GM10248 (cell line): ENCODE measurements at regions of chr2 and their contacts with region 1.

Region 1: GRCh38 chr2:183248866-183249567 is 124.8 kb downstream of the NUP35 start:
- DNase-seq: peak; percentile 24
- CTCF ChIP-seq: peak; percentile 56

Region 2: DNA sequence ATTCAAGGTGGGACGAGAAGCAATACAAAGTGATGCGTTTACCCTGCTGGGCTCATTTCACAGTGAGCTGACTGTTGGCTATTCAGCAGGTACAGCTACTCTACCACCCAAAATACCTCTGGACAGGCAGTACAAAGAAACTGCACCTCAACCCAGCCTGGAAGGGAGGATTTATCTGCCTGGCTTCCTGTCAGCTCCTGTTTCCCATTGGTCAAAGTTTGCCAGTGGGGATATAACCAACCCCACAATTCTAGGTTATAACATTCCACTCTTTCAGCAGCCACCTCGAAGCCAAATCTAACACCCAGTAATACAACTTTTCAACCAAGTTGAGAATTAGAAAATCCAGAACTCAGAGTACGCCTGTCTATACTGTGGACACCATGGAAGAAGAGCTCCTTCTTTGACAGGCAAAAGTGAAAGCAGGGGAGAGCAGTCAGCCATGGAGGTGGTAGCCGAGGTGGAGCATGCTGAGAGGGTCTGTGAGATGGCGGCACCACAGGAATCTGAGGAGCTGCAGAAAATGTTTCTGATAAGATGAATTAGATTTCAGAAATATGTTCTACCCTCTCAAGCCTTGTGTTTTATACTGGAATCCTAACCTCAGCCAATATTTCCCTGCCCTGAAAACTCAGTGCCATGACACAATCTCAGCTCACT is 159.7 kb before region 1 on chr2:
- CTCF ChIA-PET with region 1: no interaction called
- POLR2A ChIA-PET with region 1: no interaction called
- DNase-seq: no peak
- CTCF ChIP-seq: no peak

Region 3: GRCh38 chr2:183259921-183260320 is 10.9 kb after region 1 on chr2:
- CTCF ChIA-PET with region 1: interaction called, 21 read pairs
- POLR2A ChIA-PET with region 1: no interaction called
- DNase-seq: no peak
- CTCF ChIP-seq: no peak

Region 4: DNA sequence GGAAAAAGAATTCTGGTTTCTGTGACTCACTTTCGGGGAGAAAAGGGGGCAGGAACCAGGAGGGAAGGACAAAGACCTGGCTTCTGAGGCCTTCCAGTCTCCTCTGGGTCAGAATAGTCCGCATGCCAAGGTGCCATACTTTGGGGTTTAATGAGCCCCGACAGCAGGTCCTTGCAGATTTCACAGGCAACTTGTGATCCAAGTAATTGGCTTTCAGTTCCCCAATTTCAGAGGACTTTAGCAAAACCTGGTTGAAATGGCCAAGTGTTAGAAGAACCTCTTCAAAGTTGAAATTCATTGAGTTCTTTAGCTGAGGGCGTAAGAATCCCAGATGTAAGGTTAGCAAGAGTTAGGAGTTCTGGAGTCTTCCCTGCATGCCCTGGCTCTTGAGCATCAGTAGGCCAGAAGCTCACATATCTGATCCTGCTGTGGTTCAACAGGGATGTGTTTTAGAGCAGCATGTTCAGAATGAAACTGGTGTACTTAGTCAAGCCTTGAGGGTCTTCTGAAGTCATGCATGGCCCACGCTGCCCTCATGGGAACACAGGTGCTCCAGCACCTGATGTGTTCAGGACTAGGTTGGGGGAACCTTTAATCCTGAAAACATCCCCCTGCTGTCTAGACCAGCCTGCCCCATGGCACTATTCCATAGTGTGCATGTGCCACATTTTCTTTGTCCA is 18.3 kb after region 1 on chr2:
- CTCF ChIA-PET with region 1: interaction called, 10 read pairs
- POLR2A ChIA-PET with region 1: no interaction called
- DNase-seq: no peak
- CTCF ChIP-seq: no peak